ENCODE measurements at regions of chr11 and their contacts with region 1.

Region 1: GRCh38 chr11:128290106-128290840 is 297.1 kb downstream of the ETS1 start:
- DNase-seq: peak in 37 of 42 donors; percentile 8 to 86 (median 58)

Region 2: GRCh38 chr11:128630367-128631230 is 340.3 kb after region 1 on chr11:
- intact Hi-C with region 1: loop called (anchors 5 kb)
- DNase-seq: peak; percentile 67 to 94 (median 84)